PC-3 (cell line): ENCODE measurements at regions of chr2 and their contacts with region 1.

Region 1: DNA sequence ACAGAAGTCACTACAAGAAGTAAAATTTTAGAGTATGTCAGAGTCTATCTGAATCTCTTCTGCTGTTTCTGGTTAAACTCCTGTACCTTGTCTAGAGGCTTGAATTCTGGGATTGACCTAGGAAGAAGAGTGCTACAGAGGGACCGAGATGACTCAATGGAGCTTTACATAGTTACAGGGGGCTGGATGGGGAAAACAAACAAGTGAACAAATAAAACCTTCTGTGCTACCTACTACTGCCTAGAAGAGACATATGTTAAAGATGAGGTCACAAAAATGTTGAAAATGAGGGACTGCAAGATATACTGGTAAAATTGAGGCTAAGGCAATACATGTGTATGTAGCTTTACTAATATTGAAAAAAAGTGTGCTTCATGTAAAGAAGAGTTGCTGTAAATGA is 265.4 kb upstream of the TFPI start:
- DNase-seq: peak; percentile 13
- ATAC-seq: peak; percentile 33; the same call in 1 of the 2 replicates
- H3K4me3 ChIP-seq: no peak overlapping the region
- H3K27ac ChIP-seq: no peak overlapping the region
- H3K4me1 ChIP-seq: no peaks in the 10 kb centered on the region
- H3K27me3 ChIP-seq: no peaks in the 10 kb centered on the region
- CTCF ChIP-seq: no peak

Region 2: DNA sequence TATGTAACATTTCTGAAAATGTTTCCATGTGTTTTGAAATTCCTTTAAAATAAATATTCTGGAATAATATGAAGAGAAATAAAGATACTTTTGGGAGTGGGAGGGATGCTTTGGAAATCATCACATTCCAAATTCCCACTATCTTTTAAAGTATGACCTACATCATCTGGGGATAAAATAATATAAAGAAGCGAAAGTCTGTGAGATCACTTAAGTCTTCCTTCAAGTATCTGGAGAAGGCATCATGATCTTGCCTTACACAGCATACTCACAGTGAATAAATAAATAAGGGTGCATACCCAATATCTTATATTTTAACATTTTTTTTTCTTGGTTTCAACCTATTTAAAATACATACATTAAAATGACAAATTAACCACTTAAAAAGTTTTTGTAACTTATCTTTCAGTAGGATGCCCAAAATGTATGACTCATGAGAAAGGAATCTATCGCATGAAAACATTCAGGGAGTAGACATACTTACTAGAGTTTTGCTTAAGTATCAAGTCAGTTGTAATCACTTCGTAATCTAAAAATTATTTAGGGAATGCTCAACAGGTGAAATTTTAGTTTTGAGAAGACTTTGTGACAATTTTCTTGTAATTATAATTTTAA is 906.2 kb after region 1 on chr2:
- CTCF ChIA-PET with region 1: no interaction called
- POLR2A ChIA-PET with region 1: interaction called, 26 read pairs
- intact Hi-C with region 1: no loop called
- DNase-seq: peak; percentile 64
- ATAC-seq: no peak
- H3K4me3 ChIP-seq: no peak overlapping the region
- H3K27ac ChIP-seq: no peak overlapping the region
- H3K4me1 ChIP-seq: no peaks in the 10 kb centered on the region
- H3K27me3 ChIP-seq: no peaks in the 10 kb centered on the region
- CTCF ChIP-seq: no peak